Common myeloid progenitor, CD34-positive (primary cell): ENCODE measurements at regions of chr14 and their contacts with region 1.

Region 1: GRCh38 chr14:53539489-53540126 is 386.5 kb upstream of the DDHD1 start:
- DNase-seq: peak; percentile 61 to 83 (median 78)
- H3K4me3 ChIP-seq: no peak overlapping the region
- H3K27ac ChIP-seq: no peak overlapping the region
- H3K4me1 ChIP-seq: no peaks in the 10 kb centered on the region
- H3K27me3 ChIP-seq: no peaks in the 10 kb centered on the region

Region 2: GRCh38 chr14:53491256-53491883 is 48.2 kb before region 1 on chr14:
- CTCF ChIA-PET with region 1: no interaction called
- POLR2A ChIA-PET with region 1: no interaction called
- DNase-seq: no peak
- H3K4me3 ChIP-seq: no peak overlapping the region
- H3K27ac ChIP-seq: no peak overlapping the region
- H3K4me1 ChIP-seq: no peaks in the 10 kb centered on the region
- H3K27me3 ChIP-seq: no peaks in the 10 kb centered on the region

Region 3: DNA sequence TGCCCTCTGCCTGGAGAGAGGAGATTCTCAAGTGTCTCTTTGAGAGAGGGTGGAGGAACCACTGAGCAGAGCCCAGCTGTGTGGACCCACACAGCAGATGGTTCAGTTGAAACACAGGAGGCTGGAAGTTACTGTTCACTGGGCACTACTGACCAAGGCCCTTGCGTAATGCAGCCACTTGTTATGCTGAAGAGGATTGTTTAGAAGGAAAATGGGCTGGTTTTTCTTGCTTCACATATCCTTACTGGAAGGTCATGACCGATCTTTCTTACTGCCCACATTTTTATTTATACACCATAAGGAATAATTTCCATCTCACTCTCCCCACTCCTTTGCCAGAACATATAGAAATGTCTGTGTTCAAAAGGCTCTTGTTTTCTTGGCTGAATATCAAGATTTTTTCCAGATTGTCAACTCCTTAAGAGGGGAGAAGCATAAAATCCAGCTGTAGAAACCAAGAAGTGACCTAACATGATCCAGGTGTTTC is 11.4 kb before region 1 on chr14:
- CTCF ChIA-PET with region 1: interaction called, 21 read pairs
- POLR2A ChIA-PET with region 1: no interaction called
- DNase-seq: no peak
- H3K4me3 ChIP-seq: no peak overlapping the region
- H3K27ac ChIP-seq: no peak overlapping the region
- H3K4me1 ChIP-seq: no peaks in the 10 kb centered on the region
- H3K27me3 ChIP-seq: no peaks in the 10 kb centered on the region

Region 4: GRCh38 chr14:54175298-54175942 is 635.8 kb after region 1 on chr14:
- CTCF ChIA-PET with region 1: interaction called, 13 read pairs
- POLR2A ChIA-PET with region 1: interaction called, 3 read pairs
- DNase-seq: peak; percentile 61 to 75 (median 61)
- H3K4me3 ChIP-seq: no peak overlapping the region
- H3K27ac ChIP-seq: no peak overlapping the region
- H3K4me1 ChIP-seq: peaks cover 0 to 17% (median 7%) of the 10 kb centered on the region in 4 experiments
- H3K27me3 ChIP-seq: peaks cover 0 to 27% (median 6%) of the 10 kb centered on the region in 5 experiments

Region 5: GRCh38 chr14:54347997-54348611 is 808.5 kb after region 1 on chr14:
- CTCF ChIA-PET with region 1: interaction called, 40 read pairs
- POLR2A ChIA-PET with region 1: no interaction called
- DNase-seq: peak; percentile 36 to 66 (median 59)
- H3K4me3 ChIP-seq: no peak overlapping the region
- H3K27ac ChIP-seq: no peak overlapping the region
- H3K4me1 ChIP-seq: peaks cover 0 to 8% (median 3%) of the 10 kb centered on the region in 4 experiments
- H3K27me3 ChIP-seq: peaks cover 0 to 13% (median 5%) of the 10 kb centered on the region in 5 experiments